ENCODE measurements at regions of chr14 and their contacts with region 1.

Region 1: DNA sequence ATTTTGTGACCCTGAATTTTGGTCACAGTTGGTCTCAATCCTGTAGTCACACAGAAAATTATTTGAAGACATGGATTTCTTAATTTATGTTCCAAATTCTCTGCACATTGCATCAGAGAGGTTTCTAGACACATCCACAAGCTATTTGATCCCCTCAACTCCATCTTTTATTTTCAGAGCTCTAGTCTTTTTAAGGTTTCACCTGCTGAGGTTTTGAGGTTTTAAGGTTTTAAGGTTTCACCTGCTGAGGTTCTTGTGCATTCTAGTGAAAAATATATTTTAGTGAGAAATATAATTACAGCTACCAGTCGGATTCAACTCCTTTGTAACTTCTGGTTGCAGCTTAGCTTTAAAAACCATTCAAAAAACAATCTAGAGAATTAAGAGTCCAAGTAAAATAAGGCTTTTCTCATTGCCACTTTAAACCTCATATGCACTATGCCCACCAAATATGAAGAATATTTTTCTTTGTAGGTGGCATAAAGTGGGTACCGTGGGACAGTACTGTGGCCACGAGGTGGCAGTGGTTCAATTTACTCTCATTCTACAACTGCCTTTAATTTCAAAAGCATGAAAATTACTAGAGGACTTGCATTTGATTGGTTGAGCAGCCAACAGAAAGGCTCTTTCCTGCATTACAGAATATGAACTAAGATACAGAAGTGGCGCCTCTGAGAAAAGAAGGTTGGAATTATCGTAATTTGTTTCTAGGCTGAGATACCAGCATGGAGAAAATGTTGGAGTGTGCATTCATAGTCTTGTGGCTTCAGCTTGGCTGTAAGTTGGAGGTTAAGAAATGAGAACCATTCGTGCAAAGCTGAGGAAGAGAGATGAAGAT is 366.5 kb upstream of the OR4E1 start:
- DNase-seq: peak; percentile 75
- ATAC-seq: peak; percentile 91
- H3K4me3 Mint-ChIP-seq: peak overlapping the region; percentile 77
- H3K27ac Mint-ChIP-seq: peak overlapping the region; percentile 82
- H3K4me1 Mint-ChIP-seq: peaks cover 9% of the 10 kb centered on the region
- H3K27me3 Mint-ChIP-seq: no peaks in the 10 kb centered on the region
- CTCF ChIP-seq: peak; percentile 48

Region 2: GRCh38 chr14:21940887-21941856 is 99.0 kb before region 1 on chr14:
- CTCF ChIA-PET with region 1: no interaction called
- POLR2A ChIA-PET with region 1: no interaction called
- intact Hi-C with region 1: no loop called
- DNase-seq: peak; percentile 62
- ATAC-seq: peak; percentile 87
- H3K4me3 Mint-ChIP-seq: peak overlapping the region; percentile 73
- H3K27ac Mint-ChIP-seq: peak overlapping the region; percentile 83
- H3K4me1 Mint-ChIP-seq: peaks cover 25% of the 10 kb centered on the region
- H3K27me3 Mint-ChIP-seq: no peaks in the 10 kb centered on the region
- CTCF ChIP-seq: peak; percentile 54

Region 3: GRCh38 chr14:21997300-21997699 is 42.9 kb before region 1 on chr14:
- CTCF ChIA-PET with region 1: interaction called, 15 read pairs
- POLR2A ChIA-PET with region 1: no interaction called
- intact Hi-C with region 1: loop called (anchors 5 kb)
- DNase-seq: peak; percentile 66
- ATAC-seq: peak; percentile 88
- H3K4me3 Mint-ChIP-seq: peak overlapping the region; percentile 95
- H3K27ac Mint-ChIP-seq: peak overlapping the region; percentile 96
- H3K4me1 Mint-ChIP-seq: peaks cover 20% of the 10 kb centered on the region
- H3K27me3 Mint-ChIP-seq: no peaks in the 10 kb centered on the region
- CTCF ChIP-seq: peak; percentile 33

Region 4: DNA sequence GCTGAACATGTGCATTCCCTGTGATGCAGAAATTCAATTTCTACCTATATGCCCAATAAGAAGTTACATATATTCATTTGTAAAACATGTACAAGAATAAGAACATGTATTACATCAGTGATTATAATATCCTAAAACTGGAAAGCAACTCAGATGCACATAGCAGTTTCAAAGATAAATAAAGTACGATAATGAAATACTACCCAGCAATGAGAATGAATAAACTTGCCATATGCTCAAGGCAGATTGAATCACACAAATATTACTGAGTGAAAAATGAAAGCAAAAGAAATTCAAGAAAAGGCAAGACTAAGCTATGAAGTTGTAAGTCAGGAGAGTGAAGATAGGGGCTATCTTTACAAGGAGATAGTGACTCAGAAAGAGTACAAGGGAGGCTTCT is 21.3 kb before region 1 on chr14:
- CTCF ChIA-PET with region 1: interaction called, 11 read pairs
- POLR2A ChIA-PET with region 1: no interaction called
- intact Hi-C with region 1: no loop called
- DNase-seq: no peak
- ATAC-seq: no peak
- H3K4me3 Mint-ChIP-seq: no peak overlapping the region
- H3K27ac Mint-ChIP-seq: no peak overlapping the region
- H3K4me1 Mint-ChIP-seq: peaks cover 3% of the 10 kb centered on the region
- H3K27me3 Mint-ChIP-seq: no peaks in the 10 kb centered on the region
- CTCF ChIP-seq: no peak

Region 5: DNA sequence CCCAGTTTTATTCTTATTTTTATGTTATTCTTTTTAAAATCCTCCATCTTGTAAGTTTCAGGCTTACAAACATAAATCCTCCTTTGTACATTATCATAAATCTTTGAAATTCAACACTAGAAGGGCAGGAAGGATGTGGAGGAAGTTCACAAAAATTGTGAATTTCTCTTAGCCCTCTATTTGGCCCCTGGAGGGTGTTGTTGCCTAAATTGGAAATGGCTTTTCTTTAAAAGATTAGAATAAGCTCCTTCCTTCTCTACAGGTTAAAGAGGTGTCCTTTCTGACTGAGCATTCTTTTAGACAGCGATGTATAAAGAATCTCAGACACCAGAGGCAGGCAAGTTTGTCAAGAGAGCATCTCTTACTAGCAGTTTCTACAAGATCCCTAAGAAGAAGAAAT is 25.2 kb after region 1 on chr14:
- CTCF ChIA-PET with region 1: interaction called, 11 read pairs
- POLR2A ChIA-PET with region 1: no interaction called
- intact Hi-C with region 1: no loop called
- DNase-seq: no peak
- ATAC-seq: no peak
- H3K4me3 Mint-ChIP-seq: peak overlapping the region; percentile 52
- H3K27ac Mint-ChIP-seq: peak overlapping the region; percentile 59
- H3K4me1 Mint-ChIP-seq: peaks cover 19% of the 10 kb centered on the region
- H3K27me3 Mint-ChIP-seq: no peaks in the 10 kb centered on the region
- CTCF ChIP-seq: no peak

Region 6: GRCh38 chr14:22338917-22339715 is 299.0 kb after region 1 on chr14:
- CTCF ChIA-PET with region 1: no interaction called
- POLR2A ChIA-PET with region 1: no interaction called
- intact Hi-C with region 1: no loop called
- DNase-seq: no peak
- ATAC-seq: no peak
- H3K4me3 Mint-ChIP-seq: no peak overlapping the region
- H3K27ac Mint-ChIP-seq: no peak overlapping the region
- H3K4me1 Mint-ChIP-seq: no peaks in the 10 kb centered on the region
- H3K27me3 Mint-ChIP-seq: no peaks in the 10 kb centered on the region
- CTCF ChIP-seq: no peak

Measured in activated CD8-positive, alpha-beta T cell treated with anti-CD3 and anti-CD28 coated beads for 36 hours (primary cell).